ENCODE measurements at regions of chr13 and their contacts with region 1.

Region 1: DNA sequence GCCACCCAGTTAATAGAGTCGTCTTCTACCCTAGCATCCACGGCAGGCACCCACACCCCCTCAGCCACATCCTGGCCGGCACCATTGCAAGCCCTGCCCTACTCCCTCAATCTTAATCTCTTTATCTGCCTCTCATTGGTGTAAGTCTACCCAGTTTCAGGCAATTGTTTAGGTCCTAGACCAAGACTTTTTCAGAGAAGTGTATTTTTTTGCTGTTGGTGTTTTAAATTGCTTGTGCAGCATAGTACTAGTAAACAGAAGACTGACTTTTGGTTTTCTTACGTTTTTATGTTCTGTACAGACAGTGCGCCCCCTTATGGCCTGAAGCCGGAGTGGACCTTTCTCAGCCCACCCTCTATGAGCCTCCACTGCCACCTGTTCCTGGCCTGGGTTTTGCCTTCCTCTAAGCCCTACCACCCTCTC is 2.3 kb upstream of the LCP1 start:
- DNase-seq: no peak
- ATAC-seq: peak; percentile 65
- H3K4me3 ChIP-seq: peak overlapping the region; percentile 68; the same call in 1 of the 2 replicates
- H3K27ac ChIP-seq: peak overlapping the region; percentile 99
- H3K4me1 ChIP-seq: peaks cover 7% of the 10 kb centered on the region
- H3K27me3 ChIP-seq: no peaks in the 10 kb centered on the region
- CTCF ChIP-seq: peak; percentile 89 to 90 (median 90)
- EP300 ChIP-seq: no peak
- POLR2A ChIP-seq: no peak
- RAD21 ChIP-seq: peak; percentile 69

Region 2: DNA sequence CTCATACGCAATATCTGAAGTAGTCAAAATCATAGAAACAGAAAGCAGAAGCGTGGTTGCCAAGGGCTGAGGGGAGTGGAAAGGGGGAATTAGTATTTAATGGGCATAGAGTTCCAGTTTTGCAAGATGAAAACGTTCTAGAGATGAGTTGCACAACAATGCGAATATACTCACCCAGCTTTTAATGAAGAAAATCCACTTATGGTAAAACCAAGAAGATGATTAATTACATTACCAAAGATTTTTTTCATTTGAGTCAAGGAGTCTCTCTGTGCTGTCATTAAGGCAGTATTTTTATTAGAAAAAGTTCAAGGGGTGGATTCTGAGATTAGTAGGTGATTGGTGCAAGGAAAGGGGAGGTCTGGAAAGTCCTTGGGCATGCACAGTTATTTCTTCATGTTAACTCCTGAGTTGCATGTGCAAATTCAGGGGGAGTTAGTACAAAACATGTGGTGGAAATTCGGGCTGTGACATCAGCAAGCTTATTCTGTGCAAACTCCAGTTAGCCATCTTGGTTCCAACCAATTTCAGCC is 489.0 kb before region 1 on chr13:
- CTCF ChIA-PET with region 1: no interaction called
- POLR2A ChIA-PET with region 1: interaction called, 4 read pairs
- RAD21 ChIA-PET with region 1: interaction called, 7 read pairs
- SMC1A ChIA-PET with region 1: no interaction called
- in situ Hi-C with region 1: loop called (anchors 10 kb)
- intact Hi-C with region 1: loop called (anchors 2 kb)
- DNase-seq: peak; percentile 68
- ATAC-seq: peak; percentile 66
- H3K4me3 ChIP-seq: peak overlapping the region; percentile 66
- H3K27ac ChIP-seq: peak overlapping the region; percentile 98
- H3K4me1 ChIP-seq: peaks cover 14% of the 10 kb centered on the region
- H3K27me3 ChIP-seq: no peaks in the 10 kb centered on the region
- CTCF ChIP-seq: no peak
- EP300 ChIP-seq: peak in 1 of 2 experiments; percentile 57; a peak in 1 of 4 replicates
- POLR2A ChIP-seq: 0 out of 2 replicates have a peak, but pooled peaks have one; percentile 23
- RAD21 ChIP-seq: no peak

Region 3: DNA sequence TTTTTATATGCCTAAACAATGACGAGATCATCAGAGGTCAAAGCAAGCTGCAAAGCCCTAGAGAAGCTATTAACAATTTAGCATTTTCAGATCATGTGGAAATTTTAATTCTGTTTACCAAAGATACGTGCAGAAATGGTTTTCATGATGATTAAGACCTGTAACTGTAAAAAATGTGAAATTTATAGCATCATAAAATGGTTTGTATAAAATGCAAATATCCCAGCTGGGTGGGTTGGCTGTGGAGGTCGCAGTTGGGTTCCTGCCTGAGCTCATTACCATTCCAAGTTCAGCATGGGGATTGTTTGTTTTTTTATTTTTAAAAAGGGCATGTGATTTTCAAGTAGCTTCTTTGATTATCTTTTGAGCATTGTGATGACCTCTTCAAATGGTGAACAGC is 284.9 kb before region 1 on chr13:
- CTCF ChIA-PET with region 1: no interaction called
- POLR2A ChIA-PET with region 1: no interaction called
- RAD21 ChIA-PET with region 1: no interaction called
- SMC1A ChIA-PET with region 1: no interaction called
- in situ Hi-C with region 1: no loop called
- intact Hi-C with region 1: no loop called
- DNase-seq: no peak
- ATAC-seq: no peak
- H3K4me3 ChIP-seq: no peak overlapping the region
- H3K27ac ChIP-seq: no peak overlapping the region
- H3K4me1 ChIP-seq: no peaks in the 10 kb centered on the region
- H3K27me3 ChIP-seq: peaks cover 0 to 6% of the 10 kb centered on the region in 2 experiments; a peak in 3 of 4 replicates
- CTCF ChIP-seq: no peak
- EP300 ChIP-seq: no peak
- POLR2A ChIP-seq: no peak
- RAD21 ChIP-seq: no peak

Region 4: DNA sequence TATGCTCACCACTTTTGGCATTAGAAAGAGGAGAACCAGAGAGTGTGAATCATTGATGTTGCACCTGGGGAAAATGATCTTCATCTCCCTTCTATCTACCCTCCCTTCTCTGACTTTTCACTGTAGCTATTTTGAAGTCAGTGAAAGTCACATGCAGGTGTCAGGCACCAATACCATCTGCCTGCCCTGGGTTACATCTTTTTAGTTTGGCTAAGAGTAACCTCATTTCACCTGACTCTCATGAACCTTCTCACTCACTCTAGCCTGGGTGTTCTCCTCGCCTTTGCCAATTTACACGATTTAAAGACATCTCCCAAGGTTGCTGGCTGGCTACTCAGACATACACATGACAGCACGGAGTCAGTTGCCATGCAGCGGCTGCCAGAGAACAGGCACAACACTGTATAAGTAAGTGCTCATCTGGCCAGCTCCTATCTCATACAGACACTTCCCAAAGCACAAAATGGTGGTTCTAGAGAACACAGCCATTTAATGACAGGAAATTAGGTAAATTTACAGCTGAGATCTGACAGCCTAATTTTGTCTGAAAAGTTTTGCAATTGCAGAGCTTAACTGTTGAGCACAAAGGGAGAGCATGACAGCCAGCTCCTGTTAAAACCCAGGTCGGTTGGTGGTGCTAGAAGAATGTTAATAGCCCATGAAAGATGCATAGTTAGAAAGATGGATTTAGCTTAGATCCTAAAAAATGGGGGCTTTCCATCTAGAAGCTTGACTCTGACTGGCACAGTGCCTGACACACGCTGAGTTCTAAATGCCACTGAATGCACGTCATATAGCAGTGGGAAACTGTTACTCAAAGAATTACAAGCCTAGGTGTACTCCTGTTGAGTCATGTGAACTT is 34.8 kb before region 1 on chr13:
- CTCF ChIA-PET with region 1: interaction called, 172 read pairs
- POLR2A ChIA-PET with region 1: no interaction called
- RAD21 ChIA-PET with region 1: no interaction called
- SMC1A ChIA-PET with region 1: no interaction called
- in situ Hi-C with region 1: no loop called
- intact Hi-C with region 1: no loop called
- DNase-seq: no peak
- ATAC-seq: peak; percentile 20
- H3K4me3 ChIP-seq: no peak overlapping the region
- H3K27ac ChIP-seq: no peak overlapping the region; the same call in 1 of the 2 replicates
- H3K4me1 ChIP-seq: no peaks in the 10 kb centered on the region
- H3K27me3 ChIP-seq: no peaks in the 10 kb centered on the region
- CTCF ChIP-seq: no peak
- EP300 ChIP-seq: no peak
- POLR2A ChIP-seq: no peak; the same call in none of the 2 replicates
- RAD21 ChIP-seq: no peak

Region 5: DNA sequence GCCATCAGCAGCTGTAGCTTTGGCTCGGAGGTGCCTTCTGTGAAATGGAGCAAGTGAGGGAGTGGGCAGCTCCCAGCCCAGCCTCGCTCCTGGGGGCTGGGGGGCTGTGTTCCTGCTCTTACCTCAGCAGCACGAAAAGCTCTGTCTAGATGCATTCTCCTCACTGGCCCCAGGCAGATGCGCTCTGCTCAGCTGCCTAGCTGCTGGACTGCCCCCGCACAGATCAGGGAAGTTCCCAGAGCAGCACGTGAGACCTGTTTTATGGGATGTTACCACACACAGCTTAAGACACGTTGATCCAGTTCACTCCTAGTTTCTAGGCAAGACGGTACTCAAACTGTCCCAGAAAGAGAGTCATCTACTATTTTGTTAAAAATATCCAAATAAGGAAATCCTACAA is 15.9 kb before region 1 on chr13:
- CTCF ChIA-PET with region 1: interaction called, 26 read pairs
- POLR2A ChIA-PET with region 1: interaction called, 95 read pairs
- RAD21 ChIA-PET with region 1: interaction called, 184 read pairs
- SMC1A ChIA-PET with region 1: interaction called, 295 read pairs
- in situ Hi-C with region 1: no loop called
- intact Hi-C with region 1: loop called (anchors 1 kb)
- DNase-seq: no peak
- ATAC-seq: peak; percentile 52
- H3K4me3 ChIP-seq: peak overlapping the region; percentile 72
- H3K27ac ChIP-seq: peak overlapping the region; percentile 85
- H3K4me1 ChIP-seq: peaks cover 65% of the 10 kb centered on the region
- H3K27me3 ChIP-seq: no peaks in the 10 kb centered on the region
- CTCF ChIP-seq: no peak
- EP300 ChIP-seq: no peak
- POLR2A ChIP-seq: peak; percentile 72
- RAD21 ChIP-seq: no peak

Region 6: GRCh38 chr13:46387064-46387851 is 203.0 kb after region 1 on chr13 and contains the start of gene RUBCNL:
- CTCF ChIA-PET with region 1: interaction called, 3 read pairs
- POLR2A ChIA-PET with region 1: no interaction called
- RAD21 ChIA-PET with region 1: interaction called, 4 read pairs
- SMC1A ChIA-PET with region 1: interaction called, 3 read pairs
- in situ Hi-C with region 1: no loop called
- intact Hi-C with region 1: loop called (anchors 5 kb)
- DNase-seq: no peak
- ATAC-seq: peak; percentile 47
- H3K4me3 ChIP-seq: peak within 1 kb of the TSS; percentile 86
- H3K27ac ChIP-seq: peak within 1 kb of the TSS; percentile 85
- H3K4me1 ChIP-seq: peaks cover 31% of the 10 kb centered on the region
- H3K27me3 ChIP-seq: no peaks in the 10 kb centered on the region
- CTCF ChIP-seq: peak; percentile 2 to 39 (median 30); a peak in 3 of 6 replicates
- EP300 ChIP-seq: no peak
- POLR2A ChIP-seq: peak; percentile 65
- RAD21 ChIP-seq: peak; percentile 51
- polyA plus RNA-seq, gene RUBCNL: 21.4 to 28.5 TPM